Stomach (tissue), 19 donors: ENCODE measurements at regions of chr14 and their contacts with region 1.

Region 1: DNA sequence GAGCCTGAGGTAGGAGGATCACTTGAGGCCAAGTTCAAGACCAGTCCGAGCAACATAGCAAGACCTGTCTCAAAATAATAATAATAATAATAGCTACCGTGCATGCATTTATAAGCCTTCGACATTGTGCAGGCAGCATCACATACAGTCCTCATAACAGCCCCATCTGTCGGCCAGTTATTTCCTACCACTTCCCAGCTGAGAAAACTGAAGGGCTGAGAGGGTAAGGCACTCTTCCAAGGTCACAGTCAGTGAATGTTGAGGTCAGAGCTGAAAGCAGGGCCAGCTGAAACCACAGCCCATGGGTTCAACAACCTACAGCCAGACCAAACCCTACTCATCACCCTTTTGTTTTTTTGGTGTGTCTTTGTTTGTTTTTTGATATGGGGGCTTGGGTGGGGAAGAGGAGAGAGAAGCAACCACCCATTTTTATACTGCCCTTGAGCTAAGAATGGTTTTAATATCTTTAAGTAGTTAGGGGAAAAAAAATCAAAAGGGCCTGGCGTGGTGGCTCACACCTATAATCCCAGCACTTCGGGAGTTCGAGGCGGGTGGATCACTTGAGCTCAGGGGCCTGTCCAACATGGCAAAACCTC is 16.8 kb upstream of the ITPK1 start:
- DNase-seq: peak; percentile 63 to 72
- H3K4me3 ChIP-seq: no peak overlapping the region
- H3K27ac ChIP-seq: peak overlapping the region in 4 of 5 donors; percentile 37 to 59 (median 56)
- H3K4me1 ChIP-seq: peaks cover 6 to 46% (median 38%) of the 10 kb centered on the region in 4 donors
- H3K27me3 ChIP-seq: no peaks in the 10 kb centered on the region
- CTCF ChIP-seq: peak in 3 of 7 experiments; percentile 8 to 36 (median 21)
- EP300 ChIP-seq: no peak
- POLR2A ChIP-seq: no peak

Region 2: GRCh38 chr14:92951912-92952471 is 180.6 kb before region 1 on chr14:
- intact Hi-C with region 1: loop called (anchors 10 kb)
- DNase-seq: peak; percentile 86 to 91
- H3K4me3 ChIP-seq: no peak overlapping the region
- H3K27ac ChIP-seq: no peak overlapping the region
- H3K4me1 ChIP-seq: peaks cover 0 to 13% (median 6%) of the 10 kb centered on the region in 4 donors
- H3K27me3 ChIP-seq: no peaks in the 10 kb centered on the region
- CTCF ChIP-seq: peak in 6 of 7 experiments; percentile 70 to 98 (median 94)
- EP300 ChIP-seq: no peak
- POLR2A ChIP-seq: no peak